Breast epithelium (tissue), 4 donors: ENCODE measurements at regions of chrX and their contacts with region 1.

Region 1: GRCh38 chrX:114924856-114925255 is 92.6 kb downstream of the IL13RA2 start:
- DNase-seq: no peak
- H3K4me3 ChIP-seq: no peak overlapping the region
- H3K27ac ChIP-seq: no peak overlapping the region
- H3K4me1 ChIP-seq: no peaks in the 10 kb centered on the region
- H3K27me3 ChIP-seq: peaks cover 0 to 43% of the 10 kb centered on the region in 2 donors
- CTCF ChIP-seq: no peak
- POLR2A ChIP-seq: no peak

Region 2: GRCh38 chrX:113962343-113962742 is 962.5 kb before region 1 on chrX:
- intact Hi-C with region 1: no loop called
- DNase-seq: no peak
- H3K4me3 ChIP-seq: no peak overlapping the region
- H3K27ac ChIP-seq: no peak overlapping the region
- H3K4me1 ChIP-seq: no peaks in the 10 kb centered on the region
- H3K27me3 ChIP-seq: peaks cover 0 to 37% of the 10 kb centered on the region in 2 donors
- CTCF ChIP-seq: no peak
- POLR2A ChIP-seq: no peak

Region 3: DNA sequence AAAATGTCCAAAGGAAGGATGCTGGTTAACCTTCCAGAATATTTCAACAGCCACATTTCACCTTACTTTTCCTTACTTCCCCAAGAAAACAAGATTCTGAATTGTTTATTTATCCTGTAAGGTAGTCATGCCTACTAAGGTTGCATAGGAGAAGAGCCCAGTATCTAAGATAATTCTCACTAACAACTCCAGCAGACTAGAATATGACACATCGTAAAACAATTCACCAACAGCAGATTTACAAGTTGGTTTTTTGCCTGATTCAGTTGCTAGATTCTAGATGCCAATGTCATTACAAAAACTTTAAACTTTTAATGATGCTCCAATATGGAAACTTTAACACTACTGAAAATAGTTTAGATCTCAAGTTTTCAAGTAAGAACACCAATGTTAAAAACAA is 83.8 kb before region 1 on chrX:
- intact Hi-C with region 1: no loop called
- DNase-seq: no peak
- H3K4me3 ChIP-seq: no peak overlapping the region
- H3K27ac ChIP-seq: no peak overlapping the region
- H3K4me1 ChIP-seq: no peaks in the 10 kb centered on the region
- H3K27me3 ChIP-seq: no peaks in the 10 kb centered on the region
- CTCF ChIP-seq: no peak
- POLR2A ChIP-seq: no peak

Region 4: GRCh38 chrX:114952696-114953095 is 27.8 kb after region 1 on chrX:
- intact Hi-C with region 1: loop called (anchors 2 kb)
- DNase-seq: no peak
- H3K4me3 ChIP-seq: no peak overlapping the region
- H3K27ac ChIP-seq: no peak overlapping the region
- H3K4me1 ChIP-seq: no peaks in the 10 kb centered on the region
- H3K27me3 ChIP-seq: peaks cover 0 to 28% of the 10 kb centered on the region in 2 donors
- CTCF ChIP-seq: no peak
- POLR2A ChIP-seq: no peak